GM13976 (cell line): ENCODE measurements at regions of chr12 and their contacts with region 1.

Region 1: DNA sequence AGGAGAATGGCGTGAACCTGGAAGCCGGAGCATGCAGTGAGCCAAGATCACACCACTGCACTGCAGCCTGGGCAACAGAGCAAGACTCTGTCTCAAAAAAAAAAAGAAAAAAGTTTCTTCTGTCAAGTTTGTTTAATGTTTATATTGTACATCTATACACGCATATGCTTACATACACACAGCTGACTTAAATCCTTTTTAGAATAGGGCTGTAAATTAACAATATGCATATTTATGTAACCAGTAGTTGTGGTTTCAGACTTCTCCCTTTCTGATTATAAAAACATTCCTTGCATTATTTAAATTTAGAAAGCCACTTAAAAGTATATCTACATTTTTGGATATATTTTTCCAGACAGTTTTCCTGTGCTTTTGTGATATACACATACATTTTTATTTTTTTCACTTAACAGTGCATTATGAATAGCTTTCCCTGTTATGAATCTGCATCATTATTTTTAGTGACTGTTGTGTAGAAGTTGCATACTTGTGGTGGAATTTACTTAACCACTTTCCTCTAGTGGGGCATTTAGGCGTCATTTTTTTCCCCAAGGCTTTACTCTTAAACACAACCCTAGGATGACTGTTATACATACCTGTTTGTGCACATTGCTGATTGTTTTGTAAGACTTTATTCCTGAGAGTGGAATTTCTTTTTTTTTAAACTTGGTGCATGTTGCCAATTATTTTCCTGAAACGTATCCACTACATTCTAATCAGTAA is 29.4 kb downstream of the POLR3B start:
- DNase-seq: no peak
- CTCF ChIP-seq: no peak

Region 2: GRCh38 chr12:106446419-106447092 is 59.6 kb after region 1 on chr12:
- in situ Hi-C with region 1: no loop called
- DNase-seq: no peak
- CTCF ChIP-seq: no peak

Region 3: GRCh38 chr12:106841510-106842302 is 454.7 kb after region 1 on chr12:
- in situ Hi-C with region 1: loop called (anchors 10 kb)
- DNase-seq: peak; percentile 58
- CTCF ChIP-seq: peak; percentile 32

Region 4: DNA sequence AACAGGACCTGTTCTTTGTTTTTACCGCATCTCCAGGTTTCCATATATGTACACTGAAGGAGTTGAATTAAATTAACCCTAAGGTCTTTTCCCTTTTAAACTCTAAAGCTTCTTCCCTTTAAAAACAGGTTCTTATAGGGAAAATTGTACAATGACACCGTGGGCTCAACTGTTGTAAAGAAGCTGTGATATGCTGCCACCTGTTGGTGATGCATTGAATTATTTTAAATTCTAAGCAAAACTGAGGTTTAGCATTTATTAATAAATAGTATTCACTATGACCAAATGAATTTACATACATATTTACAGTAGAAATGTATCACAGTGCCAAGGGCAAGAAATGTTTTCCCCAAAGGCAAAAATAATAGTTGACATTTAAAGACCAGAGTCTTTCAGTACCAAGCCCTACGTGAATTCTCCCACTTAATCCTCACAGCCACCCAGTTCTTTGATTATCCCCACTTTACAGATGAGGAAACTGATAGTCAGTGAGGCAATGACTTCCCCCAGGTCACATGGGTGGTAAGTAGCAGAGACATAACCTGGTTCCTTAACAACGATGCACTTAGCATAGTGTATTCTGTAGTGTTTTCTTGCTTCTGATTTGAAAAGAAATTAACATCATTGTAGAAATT is 533.1 kb after region 1 on chr12:
- in situ Hi-C with region 1: loop called (anchors 10 kb)
- DNase-seq: no peak
- CTCF ChIP-seq: peak; percentile 65

Region 5: GRCh38 chr12:107109741-107110719 is 723.1 kb after region 1 on chr12:
- in situ Hi-C with region 1: loop called (anchors 25 kb)
- DNase-seq: no peak
- CTCF ChIP-seq: no peak